Uterus (tissue), 4 donors: ENCODE measurements at regions of chr4 and their contacts with region 1.

Region 1: GRCh38 chr4:147707865-147708672 is 23.8 kb upstream of the ARHGAP10 start:
- DNase-seq: peak in 1 of 2 donors; percentile 53
- H3K4me3 ChIP-seq: no peak overlapping the region
- H3K27ac ChIP-seq: no peak overlapping the region
- H3K4me1 ChIP-seq: no peaks in the 10 kb centered on the region
- H3K27me3 ChIP-seq: no peaks in the 10 kb centered on the region
- CTCF ChIP-seq: peak; percentile 81 to 88 (median 85)
- POLR2A ChIP-seq: no peak

Region 2: GRCh38 chr4:147731580-147732517 is 23.8 kb after region 1 on chr4 and contains the start of gene ARHGAP10:
- intact Hi-C with region 1: loop called (anchors 2 kb)
- DNase-seq: peak; percentile 68 to 75
- H3K4me3 ChIP-seq: peak within 1 kb of the TSS; percentile 51 to 91
- H3K27ac ChIP-seq: peak within 1 kb of the TSS; percentile 84 to 87
- H3K4me1 ChIP-seq: no peaks in the 10 kb centered on the region
- H3K27me3 ChIP-seq: no peaks in the 10 kb centered on the region
- CTCF ChIP-seq: no peak
- POLR2A ChIP-seq: peak; percentile 21 to 70
- total RNA-seq, gene ARHGAP10: 25.1 to 94.4 (median 54.4) TPM

Region 3: DNA sequence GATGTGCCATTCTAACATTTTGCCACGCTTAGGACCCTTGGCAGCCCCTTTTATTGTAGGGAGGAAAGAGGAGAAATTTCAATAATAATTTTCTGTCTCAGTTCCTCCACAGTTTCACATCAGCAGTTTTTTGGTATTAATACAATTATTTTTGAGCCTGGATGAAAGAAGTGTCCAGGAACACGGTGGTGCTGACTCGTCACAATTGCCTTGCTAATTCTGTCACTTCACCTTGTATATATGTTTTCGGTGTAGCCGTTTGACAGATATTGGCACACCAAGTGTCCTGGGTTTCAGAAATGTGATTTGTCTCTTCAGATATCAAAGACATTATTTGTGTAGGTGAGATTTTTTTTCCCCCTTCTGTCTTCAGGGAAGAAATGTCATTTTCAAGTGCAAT is 166.0 kb after region 1 on chr4:
- intact Hi-C with region 1: loop called (anchors 5 kb)
- DNase-seq: no peak
- H3K4me3 ChIP-seq: no peak overlapping the region
- H3K27ac ChIP-seq: no peak overlapping the region
- H3K4me1 ChIP-seq: no peaks in the 10 kb centered on the region
- H3K27me3 ChIP-seq: no peaks in the 10 kb centered on the region
- CTCF ChIP-seq: no peak
- POLR2A ChIP-seq: no peak